ENCODE measurements at regions of chr17 and their contacts with region 1.

Region 1: GRCh38 chr17:78497115-78497540 is 80.1 kb downstream of the DNAH17 start:
- DNase-seq: peak; percentile 76
- H3K4me3 ChIP-seq: no peak overlapping the region
- H3K27ac ChIP-seq: no peak overlapping the region
- H3K4me1 ChIP-seq: no peaks in the 10 kb centered on the region
- H3K27me3 ChIP-seq: no peaks in the 10 kb centered on the region
- CTCF ChIP-seq: peak; percentile 63 to 91
- POLR2A ChIP-seq: no peak

Region 2: DNA sequence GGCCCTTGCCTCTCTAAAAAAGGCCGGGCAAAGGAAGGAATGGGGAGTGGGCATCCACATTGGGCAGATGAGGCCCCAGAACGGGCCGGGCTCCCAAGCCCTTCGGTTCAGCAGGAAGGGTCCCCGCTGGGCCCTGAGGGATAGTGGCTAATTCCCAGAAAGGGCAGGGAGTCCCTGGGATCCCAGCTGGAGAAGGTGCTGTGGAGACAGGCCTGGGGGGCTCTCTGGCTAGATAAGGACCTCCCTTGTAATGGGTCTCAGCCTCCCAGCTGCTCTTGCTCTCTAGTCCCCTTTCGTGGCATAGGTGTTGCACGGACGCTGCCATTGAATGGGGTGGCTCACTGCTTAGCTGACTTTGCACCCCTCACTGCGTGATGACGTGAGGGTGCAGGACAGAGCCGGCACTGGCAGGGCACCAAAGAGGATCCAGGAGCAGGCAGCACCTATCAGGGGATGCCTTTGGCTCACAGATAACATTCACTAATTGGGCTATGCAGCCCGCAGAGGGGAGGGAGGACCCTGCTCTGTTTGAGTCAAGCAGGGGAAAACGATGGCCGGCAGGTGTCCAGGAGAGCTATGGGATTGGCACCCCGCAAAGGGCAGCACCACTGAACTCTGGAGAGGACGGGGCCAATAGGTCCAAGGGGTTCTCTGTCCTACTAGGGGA is 29.9 kb before region 1 on chr17:
- CTCF ChIA-PET with region 1: no interaction called
- POLR2A ChIA-PET with region 1: no interaction called
- dilution Hi-C with region 1: no loop called
- intact Hi-C with region 1: no loop called
- DNase-seq: no peak
- H3K4me3 ChIP-seq: no peak overlapping the region
- H3K27ac ChIP-seq: no peak overlapping the region
- H3K4me1 ChIP-seq: no peaks in the 10 kb centered on the region
- H3K27me3 ChIP-seq: no peaks in the 10 kb centered on the region
- CTCF ChIP-seq: no peak
- POLR2A ChIP-seq: no peak

Region 3: GRCh38 chr17:78479369-78479768 is 17.8 kb before region 1 on chr17:
- CTCF ChIA-PET with region 1: no interaction called
- POLR2A ChIA-PET with region 1: no interaction called
- dilution Hi-C with region 1: no loop called
- intact Hi-C with region 1: no loop called
- DNase-seq: no peak
- H3K4me3 ChIP-seq: no peak overlapping the region
- H3K27ac ChIP-seq: no peak overlapping the region
- H3K4me1 ChIP-seq: peaks cover 1% of the 10 kb centered on the region
- H3K27me3 ChIP-seq: peaks cover 0 to 3% of the 10 kb centered on the region in 2 experiments
- CTCF ChIP-seq: no peak
- POLR2A ChIP-seq: no peak

Region 4: DNA sequence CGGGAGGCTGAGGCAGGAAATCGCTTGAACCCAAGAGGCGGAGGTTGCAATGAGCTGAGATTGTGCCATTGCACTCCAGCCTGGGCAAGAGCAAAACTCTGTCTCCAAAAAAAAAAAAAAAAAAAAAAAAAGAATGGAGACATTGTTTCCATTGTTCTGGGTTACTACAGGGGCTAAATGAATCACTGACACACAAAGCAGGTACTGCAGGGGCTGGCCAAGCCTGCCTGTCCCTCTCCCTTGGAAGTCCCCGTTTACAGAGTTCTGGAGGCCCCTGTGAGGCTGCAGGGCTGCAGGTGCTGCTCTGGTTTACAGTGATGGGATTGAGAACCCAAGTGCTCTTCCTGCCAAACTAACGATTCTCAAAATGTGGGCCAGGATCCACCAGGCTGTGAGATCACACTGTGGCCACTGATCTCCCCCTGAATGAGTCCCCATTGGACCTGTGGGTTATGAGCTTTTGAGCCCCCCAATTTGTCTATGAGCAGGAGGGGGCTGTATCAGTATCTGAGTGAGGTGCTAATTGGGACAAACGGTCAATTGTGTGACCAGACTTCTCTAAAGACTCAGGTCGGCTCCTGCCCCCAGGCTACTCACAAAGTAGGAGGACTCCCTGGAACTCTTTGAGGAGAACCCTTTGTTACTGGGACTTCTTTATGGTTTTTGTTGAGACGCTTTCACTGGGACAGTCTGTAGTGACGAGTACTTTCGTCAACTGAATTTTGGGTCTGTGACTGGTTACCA is 41.1 kb after region 1 on chr17:
- CTCF ChIA-PET with region 1: no interaction called
- POLR2A ChIA-PET with region 1: no interaction called
- dilution Hi-C with region 1: no loop called
- intact Hi-C with region 1: no loop called
- DNase-seq: no peak
- H3K4me3 ChIP-seq: no peak overlapping the region
- H3K27ac ChIP-seq: no peak overlapping the region
- H3K4me1 ChIP-seq: no peaks in the 10 kb centered on the region
- H3K27me3 ChIP-seq: peaks cover 0 to 1% of the 10 kb centered on the region in 2 experiments
- CTCF ChIP-seq: no peak
- POLR2A ChIP-seq: no peak

Region 5: DNA sequence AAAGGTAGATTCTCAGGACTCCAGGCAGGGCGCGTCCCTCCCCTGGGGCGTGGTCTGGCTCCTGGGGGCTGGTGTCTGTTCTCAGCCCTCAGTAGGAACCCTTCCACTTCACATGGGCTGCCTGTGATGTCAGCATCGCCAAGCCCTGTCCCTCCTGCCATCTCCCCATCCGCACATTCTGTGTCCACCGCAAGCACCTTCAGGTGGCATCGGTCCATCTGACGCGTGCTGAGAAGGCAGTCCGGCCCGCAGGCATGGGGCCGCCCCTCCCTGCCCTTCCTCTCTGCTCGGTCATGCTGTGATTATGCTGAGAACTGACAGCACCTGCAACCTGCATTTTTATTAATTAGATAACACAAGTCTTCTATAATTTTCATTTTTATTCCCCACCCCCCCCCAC is 92.8 kb after region 1 on chr17:
- CTCF ChIA-PET with region 1: no interaction called
- POLR2A ChIA-PET with region 1: no interaction called
- dilution Hi-C with region 1: no loop called
- intact Hi-C with region 1: loop called (anchors 5 kb)
- DNase-seq: no peak
- H3K4me3 ChIP-seq: no peak overlapping the region
- H3K27ac ChIP-seq: no peak overlapping the region
- H3K4me1 ChIP-seq: peaks cover 15% of the 10 kb centered on the region
- H3K27me3 ChIP-seq: peaks cover 0 to 5% of the 10 kb centered on the region in 2 experiments
- CTCF ChIP-seq: no peak
- POLR2A ChIP-seq: no peak

Region 6: GRCh38 chr17:78645421-78646295 is 148.5 kb after region 1 on chr17:
- CTCF ChIA-PET with region 1: no interaction called
- POLR2A ChIA-PET with region 1: no interaction called
- dilution Hi-C with region 1: loop called (anchors 25 kb)
- intact Hi-C with region 1: no loop called
- DNase-seq: peak; percentile 10
- H3K4me3 ChIP-seq: no peak overlapping the region
- H3K27ac ChIP-seq: no peak overlapping the region
- H3K4me1 ChIP-seq: peaks cover 8% of the 10 kb centered on the region
- H3K27me3 ChIP-seq: peaks cover 2 to 3% of the 10 kb centered on the region in 2 experiments
- CTCF ChIP-seq: no peak
- POLR2A ChIP-seq: no peak

Region 7: DNA sequence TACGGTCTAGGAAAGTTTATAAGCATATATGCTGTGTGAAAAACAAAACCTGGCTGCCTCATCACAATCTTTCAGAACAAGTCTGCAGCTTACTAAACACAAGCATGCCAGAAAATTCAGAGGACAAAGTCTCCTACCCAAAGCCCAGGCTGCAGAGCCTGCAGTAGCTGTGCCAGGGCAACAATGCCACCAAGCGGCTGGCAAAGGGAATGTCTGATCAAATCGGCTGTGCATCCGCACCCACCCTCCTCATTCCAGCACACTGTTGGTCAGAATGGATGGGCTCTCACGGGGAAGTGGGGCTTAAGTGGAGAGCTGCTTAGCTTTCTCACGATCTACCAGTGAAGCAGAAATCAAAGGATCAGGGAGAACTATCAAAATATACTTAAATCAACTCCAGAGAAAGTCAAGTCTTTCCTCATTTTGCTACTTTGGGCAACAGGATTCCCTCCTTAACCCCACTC is 211.4 kb after region 1 on chr17:
- CTCF ChIA-PET with region 1: interaction called, 94 read pairs
- POLR2A ChIA-PET with region 1: no interaction called
- dilution Hi-C with region 1: no loop called
- intact Hi-C with region 1: loop called (anchors 1 kb)
- DNase-seq: peak; percentile 72
- H3K4me3 ChIP-seq: no peak overlapping the region
- H3K27ac ChIP-seq: no peak overlapping the region
- H3K4me1 ChIP-seq: peaks cover 16% of the 10 kb centered on the region
- H3K27me3 ChIP-seq: no peaks in the 10 kb centered on the region
- CTCF ChIP-seq: peak; percentile 87 to 90
- POLR2A ChIP-seq: no peak

Region 8: GRCh38 chr17:78745407-78746088 is 248.4 kb after region 1 on chr17:
- CTCF ChIA-PET with region 1: interaction called, 18 read pairs
- POLR2A ChIA-PET with region 1: no interaction called
- dilution Hi-C with region 1: no loop called
- intact Hi-C with region 1: loop called (anchors 1 kb)
- DNase-seq: peak; percentile 58
- H3K4me3 ChIP-seq: no peak overlapping the region
- H3K27ac ChIP-seq: no peak overlapping the region
- H3K4me1 ChIP-seq: peaks cover 15% of the 10 kb centered on the region
- H3K27me3 ChIP-seq: no peaks in the 10 kb centered on the region
- CTCF ChIP-seq: peak; percentile 37
- POLR2A ChIP-seq: no peak

Region 9: DNA sequence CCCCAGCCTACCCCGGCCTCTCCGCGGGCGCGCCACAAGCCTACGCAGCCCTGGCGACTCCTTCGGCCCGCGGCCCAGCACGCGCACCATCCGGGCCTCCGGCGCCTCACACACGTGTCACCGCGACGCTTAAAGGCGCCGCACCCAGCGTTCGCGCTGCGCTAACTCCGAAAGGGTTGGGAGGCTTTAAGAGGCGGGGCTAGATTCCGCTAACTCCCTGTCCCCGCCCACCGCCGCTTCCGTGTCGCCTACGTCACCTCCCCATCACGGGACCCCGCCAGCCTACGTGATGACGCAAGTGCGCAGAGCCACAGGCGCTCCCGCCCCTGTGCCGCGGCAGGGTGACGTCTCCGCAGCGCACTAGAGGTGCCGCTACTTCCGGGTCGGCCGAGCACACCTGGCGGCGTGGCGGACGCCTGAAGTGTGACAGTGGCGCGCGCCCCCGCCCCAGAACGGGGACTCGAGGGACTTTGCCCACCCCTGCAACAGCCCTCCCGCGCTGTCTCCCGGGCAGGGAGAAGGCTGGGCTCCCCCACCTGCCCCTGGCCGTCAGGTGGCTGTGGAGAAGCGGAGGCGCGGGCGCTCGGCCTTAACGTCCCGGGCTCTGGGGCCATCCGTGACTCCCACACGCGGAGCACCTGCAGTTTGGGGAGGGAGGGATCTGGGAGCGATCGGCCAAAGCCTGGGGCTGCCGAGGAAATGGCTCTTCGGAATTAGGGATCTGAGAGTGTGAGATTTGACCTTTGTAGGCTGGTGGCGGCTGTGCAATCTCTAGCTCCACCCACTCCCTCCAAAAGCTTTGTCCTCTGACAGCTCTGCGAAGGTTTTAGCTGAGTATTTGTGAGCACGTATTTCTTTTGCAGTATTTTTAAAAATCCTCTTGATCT is 343.8 kb after region 1 on chr17 and contains the start of gene USP36:
- CTCF ChIA-PET with region 1: interaction called, 5 read pairs
- POLR2A ChIA-PET with region 1: no interaction called
- dilution Hi-C with region 1: no loop called
- intact Hi-C with region 1: loop called (anchors 1 kb)
- DNase-seq: peak; percentile 99
- H3K4me3 ChIP-seq: peak within 1 kb of the TSS; percentile 64 to 72 (median 68)
- H3K27ac ChIP-seq: peak within 1 kb of the TSS; percentile 81
- H3K4me1 ChIP-seq: peaks cover 16% of the 10 kb centered on the region
- H3K27me3 ChIP-seq: no peaks in the 10 kb centered on the region
- CTCF ChIP-seq: no peak
- POLR2A ChIP-seq: peak; percentile 56
- total RNA-seq, gene USP36: 46.6 and 49.8 TPM in 2 replicates